ENCODE measurements at regions of chr19 and their contacts with region 1.

Region 1: GRCh38 chr19:13861732-13862531 is 15.0 kb upstream of the NANOS3 start:
- DNase-seq: peak; percentile 97
- ATAC-seq: peak; percentile 82
- H3K4me3 ChIP-seq: peak overlapping the region; percentile 68
- H3K27ac ChIP-seq: peak overlapping the region; percentile 88
- H3K4me1 ChIP-seq: peaks cover 9% of the 10 kb centered on the region
- H3K27me3 ChIP-seq: no peaks in the 10 kb centered on the region
- CTCF ChIP-seq: peak; percentile 90

Region 2: DNA sequence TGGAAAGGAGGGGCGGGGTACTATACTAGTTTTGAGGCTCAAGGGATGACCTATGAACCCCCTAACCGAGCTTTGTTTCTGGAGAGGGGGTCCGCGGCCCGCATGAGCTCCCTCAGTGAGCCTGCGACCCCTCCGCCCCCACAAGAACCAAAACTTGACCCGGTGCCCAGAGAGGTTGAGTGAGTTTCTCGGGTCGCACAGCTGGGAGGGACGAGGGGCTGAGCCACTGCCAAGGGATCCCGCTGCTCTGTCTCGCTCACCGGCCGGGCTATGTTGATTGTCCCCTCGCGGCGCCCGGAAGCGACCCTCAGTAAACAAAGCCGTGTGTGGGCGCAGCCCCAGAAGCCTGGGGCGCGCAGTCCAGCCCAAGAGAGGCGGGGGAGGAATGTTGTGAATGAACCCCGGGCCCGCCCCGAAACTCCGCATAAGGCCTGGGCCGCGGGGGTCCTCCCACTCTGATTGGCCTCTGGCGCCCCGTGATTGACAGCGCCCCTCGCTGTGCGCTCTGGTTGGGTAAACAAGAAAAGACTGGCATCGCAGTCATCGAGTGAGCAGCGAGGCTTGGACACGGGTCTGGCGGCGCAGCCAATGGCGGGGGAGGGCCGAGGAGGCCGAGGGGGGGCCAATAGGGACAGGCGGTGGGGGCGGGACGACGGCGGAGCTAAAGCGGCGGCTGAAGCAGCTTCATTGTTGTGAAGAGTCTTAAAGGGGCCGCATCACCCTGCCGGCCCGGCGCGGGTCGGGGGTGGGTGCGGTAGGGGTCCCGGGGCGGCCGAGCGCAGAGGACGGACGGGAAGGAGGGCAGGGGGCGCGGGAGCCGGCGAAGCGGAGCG is 67.0 kb before region 1 on chr19 and contains the start of gene ZSWIM4:
- CTCF ChIA-PET with region 1: interaction called, 4 read pairs
- POLR2A ChIA-PET with region 1: interaction called, 16 read pairs
- intact Hi-C with region 1: loop called (anchors 1 kb)
- DNase-seq: peak; percentile 100
- ATAC-seq: peak; percentile 89
- H3K4me3 ChIP-seq: peak within 1 kb of the TSS; percentile 88
- H3K27ac ChIP-seq: peak within 1 kb of the TSS; percentile 95
- H3K4me1 ChIP-seq: peaks cover 23% of the 10 kb centered on the region
- H3K27me3 ChIP-seq: no peaks in the 10 kb centered on the region
- CTCF ChIP-seq: no peak
- total RNA-seq, gene ZSWIM4: 8.0 and 11.4 TPM in 2 replicates

Region 3: GRCh38 chr19:13833330-13834243 is 28.3 kb before region 1 on chr19:
- CTCF ChIA-PET with region 1: interaction called, 17 read pairs
- POLR2A ChIA-PET with region 1: interaction called, 21 read pairs
- intact Hi-C with region 1: loop called (anchors 5 kb)
- DNase-seq: peak; percentile 97
- ATAC-seq: peak; percentile 71
- H3K4me3 ChIP-seq: no peak overlapping the region
- H3K27ac ChIP-seq: peak overlapping the region; percentile 63
- H3K4me1 ChIP-seq: peaks cover 50% of the 10 kb centered on the region
- H3K27me3 ChIP-seq: no peaks in the 10 kb centered on the region
- CTCF ChIP-seq: peak; percentile 75

Region 4: GRCh38 chr19:13846557-13847406 is 15.2 kb before region 1 on chr19:
- CTCF ChIA-PET with region 1: interaction called, 13 read pairs
- POLR2A ChIA-PET with region 1: interaction called, 15 read pairs
- intact Hi-C with region 1: loop called (anchors 1 kb)
- DNase-seq: peak; percentile 95
- ATAC-seq: peak; percentile 26
- H3K4me3 ChIP-seq: peak overlapping the region; percentile 64
- H3K27ac ChIP-seq: peak overlapping the region; percentile 99
- H3K4me1 ChIP-seq: peaks cover 72% of the 10 kb centered on the region
- H3K27me3 ChIP-seq: no peaks in the 10 kb centered on the region
- CTCF ChIP-seq: no peak

Region 5: GRCh38 chr19:13887517-13887916 is 25.6 kb after region 1 on chr19:
- CTCF ChIA-PET with region 1: no interaction called
- POLR2A ChIA-PET with region 1: no interaction called
- intact Hi-C with region 1: no loop called
- DNase-seq: no peak
- ATAC-seq: no peak
- H3K4me3 ChIP-seq: no peak overlapping the region
- H3K27ac ChIP-seq: no peak overlapping the region
- H3K4me1 ChIP-seq: no peaks in the 10 kb centered on the region
- H3K27me3 ChIP-seq: no peaks in the 10 kb centered on the region
- CTCF ChIP-seq: no peak

Region 6: GRCh38 chr19:14775869-14776586 is 914.1 kb after region 1 on chr19:
- CTCF ChIA-PET with region 1: no interaction called
- POLR2A ChIA-PET with region 1: interaction called, 13 read pairs
- intact Hi-C with region 1: no loop called
- DNase-seq: no peak
- ATAC-seq: no peak
- H3K4me3 ChIP-seq: peak overlapping the region; percentile 82
- H3K27ac ChIP-seq: peak overlapping the region; percentile 43; the same call in 1 of the 2 replicates
- H3K4me1 ChIP-seq: peaks cover 8% of the 10 kb centered on the region
- H3K27me3 ChIP-seq: no peaks in the 10 kb centered on the region
- CTCF ChIP-seq: no peak

Measured in PC-3 (cell line).